ENCODE measurements at regions of chr5 and their contacts with region 1.

Region 1: DNA sequence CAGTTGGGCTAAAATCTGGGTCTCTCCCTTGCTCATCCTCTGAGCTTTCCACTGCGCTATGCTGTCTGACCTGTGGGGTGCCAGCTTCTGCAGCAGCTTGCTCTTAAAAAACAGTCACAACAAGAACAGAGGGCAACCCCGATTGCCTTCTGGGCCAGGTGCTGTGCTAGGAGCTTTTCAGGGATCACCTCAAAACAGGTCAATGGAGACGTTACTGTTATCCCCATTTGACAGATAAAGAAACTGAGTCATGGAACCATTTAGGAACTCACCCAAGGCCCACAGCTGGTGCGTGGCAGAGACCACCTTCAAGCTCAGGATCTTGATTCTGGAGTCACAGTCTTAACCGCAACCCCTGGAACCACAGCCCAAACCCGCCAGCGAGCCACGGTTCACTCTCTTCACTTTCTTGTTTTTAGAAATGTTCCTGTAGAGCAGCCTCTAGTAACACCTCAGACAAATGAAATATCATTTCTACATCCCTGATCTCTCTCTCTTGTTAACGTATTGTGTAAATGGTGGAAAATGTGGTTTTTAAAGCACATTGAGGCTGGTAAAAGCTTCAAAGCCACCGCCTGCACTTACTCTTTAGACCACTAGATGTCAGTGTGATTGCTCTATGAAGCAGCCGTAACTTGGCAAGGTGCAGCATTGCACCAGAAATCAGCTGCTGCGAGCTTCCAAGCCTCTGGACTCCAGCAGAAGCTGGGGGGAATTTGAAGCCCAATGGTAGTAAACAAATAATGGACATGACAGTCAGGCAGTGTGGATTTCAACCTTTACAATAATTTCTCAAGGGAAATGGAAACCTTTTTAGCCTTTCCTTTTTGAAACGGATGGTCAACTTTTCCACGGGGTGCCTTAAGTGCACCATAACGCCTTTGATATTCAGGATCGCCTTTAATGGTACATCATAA is 1.7 kb downstream of the FYB1 start:
- DNase-seq: peak; percentile 81
- ATAC-seq: peak; percentile 87

Region 2: GRCh38 chr5:39424736-39425637 is 207.4 kb after region 1 on chr5 and contains the start of gene DAB2:
- intact Hi-C with region 1: no loop called
- DNase-seq: peak; percentile 88
- ATAC-seq: peak; percentile 84
- total RNA-seq, gene DAB2: 151 TPM

Region 3: DNA sequence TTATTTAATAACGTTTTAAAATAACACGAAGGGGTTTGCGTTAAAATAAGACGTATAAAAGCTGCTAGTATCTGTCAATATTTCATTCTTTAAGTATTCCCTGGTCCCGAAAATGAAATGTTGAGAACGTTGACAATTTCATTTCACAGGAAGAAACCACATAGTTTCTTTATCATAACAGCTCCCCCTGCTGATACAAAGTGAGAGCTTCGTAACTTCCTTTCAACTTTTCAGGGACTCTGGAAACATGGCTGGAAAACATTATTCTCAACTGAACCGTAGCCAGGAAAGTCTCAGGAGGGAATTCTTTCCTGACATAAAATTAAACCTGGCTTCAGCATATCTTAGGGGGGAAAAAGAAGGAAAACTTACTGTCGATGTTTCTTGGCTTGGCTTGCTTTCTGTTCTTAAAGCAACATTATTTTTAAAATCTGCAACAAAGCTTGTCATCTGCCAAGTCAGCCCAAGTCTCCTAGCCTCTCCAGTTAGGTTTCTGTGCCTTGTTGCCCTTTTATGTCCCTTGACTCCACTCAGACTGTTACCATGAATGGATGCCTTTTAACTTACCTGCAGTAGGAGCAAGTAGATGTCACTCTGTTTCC is 330.0 kb after region 1 on chr5:
- intact Hi-C with region 1: loop called (anchors 10 kb)
- DNase-seq: no peak
- ATAC-seq: peak; percentile 86

Measured in sciatic nerve (tissue), 2 donors.